Activated B cell treated with CpG ODN at 0.5 μM for 24 hours (primary cell): ENCODE measurements at regions of chr11 and their contacts with region 1.

Region 1: GRCh38 chr11:117226388-117227385 is 5.2 kb downstream of the PCSK7 start:
- DNase-seq: no peak
- ATAC-seq: peak; percentile 64
- H3K4me3 Mint-ChIP-seq: no peak overlapping the region
- H3K27ac Mint-ChIP-seq: peak overlapping the region; percentile 80
- H3K4me1 Mint-ChIP-seq: peaks cover 40% of the 10 kb centered on the region
- H3K27me3 Mint-ChIP-seq: no peaks in the 10 kb centered on the region
- CTCF ChIP-seq: no peak

Region 2: DNA sequence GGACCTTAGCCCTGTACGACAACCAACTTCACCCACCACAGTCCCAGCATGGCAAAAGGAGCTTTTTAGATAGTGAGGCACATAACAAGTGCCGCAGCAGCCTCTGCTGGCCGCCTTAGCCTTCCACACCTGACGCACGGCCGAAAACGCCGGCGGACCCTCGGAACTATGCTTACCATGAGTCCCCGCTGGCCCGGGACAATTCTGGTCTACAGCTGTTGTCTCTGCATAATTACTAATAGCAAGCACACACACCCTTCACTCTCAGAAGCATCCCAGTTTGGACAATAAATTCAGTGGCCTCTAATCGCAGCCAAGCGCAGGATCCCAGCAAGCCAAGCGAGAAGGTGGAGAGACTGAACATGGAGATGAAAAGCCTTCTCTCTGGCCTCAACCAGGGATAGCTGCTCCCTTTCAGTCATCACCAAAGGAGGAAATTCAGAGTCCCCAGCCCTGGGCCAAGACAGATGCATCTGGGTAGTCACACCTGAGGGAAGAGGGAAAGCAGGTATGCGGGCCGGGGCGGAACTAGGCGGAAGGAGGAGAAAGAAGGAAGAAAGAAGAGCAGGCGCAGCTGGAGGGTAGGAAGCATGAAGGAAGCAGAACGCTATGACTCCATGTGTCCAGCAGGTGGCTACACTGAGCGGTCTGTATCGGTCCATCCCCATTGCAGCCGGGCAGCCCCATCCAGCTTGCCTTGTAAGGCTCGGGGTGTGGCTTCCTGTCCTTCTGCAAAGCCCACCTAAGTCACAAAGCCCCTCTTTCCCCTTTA is 494.2 kb before region 1 on chr11:
- CTCF ChIA-PET with region 1: interaction called, 7 read pairs
- POLR2A ChIA-PET with region 1: interaction called, 5 read pairs
- intact Hi-C with region 1: loop called (anchors 1 kb)
- DNase-seq: peak; percentile 40
- ATAC-seq: peak; percentile 97
- H3K4me3 Mint-ChIP-seq: peak overlapping the region; percentile 53
- H3K27ac Mint-ChIP-seq: no peak overlapping the region
- H3K4me1 Mint-ChIP-seq: peaks cover 17% of the 10 kb centered on the region
- H3K27me3 Mint-ChIP-seq: peaks cover 5% of the 10 kb centered on the region
- CTCF ChIP-seq: no peak

Region 3: GRCh38 chr11:116787786-116788486 is 438.8 kb before region 1 on chr11 and contains the start of gene ZPR1:
- CTCF ChIA-PET with region 1: interaction called, 3 read pairs
- POLR2A ChIA-PET with region 1: interaction called, 5 read pairs
- intact Hi-C with region 1: loop called (anchors 2 kb)
- DNase-seq: peak; percentile 81
- ATAC-seq: peak; percentile 81
- H3K4me3 Mint-ChIP-seq: peak within 1 kb of the TSS; percentile 98
- H3K27ac Mint-ChIP-seq: peak within 1 kb of the TSS; percentile 95
- H3K4me1 Mint-ChIP-seq: peaks cover 33% of the 10 kb centered on the region
- H3K27me3 Mint-ChIP-seq: peaks cover 4% of the 10 kb centered on the region
- CTCF ChIP-seq: no peak
- total RNA-seq, gene ZPR1: 69.0 and 78.7 TPM in 2 replicates

Region 4: GRCh38 chr11:117107701-117108590 is 118.7 kb before region 1 on chr11:
- CTCF ChIA-PET with region 1: interaction called, 27 read pairs
- POLR2A ChIA-PET with region 1: no interaction called
- intact Hi-C with region 1: loop called (anchors 1 kb)
- DNase-seq: no peak
- ATAC-seq: no peak
- H3K4me3 Mint-ChIP-seq: no peak overlapping the region
- H3K27ac Mint-ChIP-seq: no peak overlapping the region
- H3K4me1 Mint-ChIP-seq: peaks cover 4% of the 10 kb centered on the region
- H3K27me3 Mint-ChIP-seq: no peaks in the 10 kb centered on the region
- CTCF ChIP-seq: no peak

Region 5: GRCh38 chr11:117178210-117179034 is 48.3 kb before region 1 on chr11 and contains the start of gene SIDT2:
- CTCF ChIA-PET with region 1: interaction called, 119 read pairs
- POLR2A ChIA-PET with region 1: interaction called, 89 read pairs
- intact Hi-C with region 1: loop called (anchors 1 kb)
- DNase-seq: peak; percentile 80
- ATAC-seq: peak; percentile 88
- H3K4me3 Mint-ChIP-seq: peak within 1 kb of the TSS; percentile 96
- H3K27ac Mint-ChIP-seq: peak within 1 kb of the TSS; percentile 91
- H3K4me1 Mint-ChIP-seq: peaks cover 34% of the 10 kb centered on the region
- H3K27me3 Mint-ChIP-seq: no peaks in the 10 kb centered on the region
- CTCF ChIP-seq: no peak
- total RNA-seq, gene SIDT2: 96.7 and 115 TPM in 2 replicates

Region 6: GRCh38 chr11:117273550-117274289 is 47.0 kb after region 1 on chr11:
- CTCF ChIA-PET with region 1: no interaction called
- POLR2A ChIA-PET with region 1: interaction called, 10 read pairs
- intact Hi-C with region 1: no loop called
- DNase-seq: no peak
- ATAC-seq: no peak
- H3K4me3 Mint-ChIP-seq: no peak overlapping the region
- H3K27ac Mint-ChIP-seq: no peak overlapping the region
- H3K4me1 Mint-ChIP-seq: peaks cover 4% of the 10 kb centered on the region
- H3K27me3 Mint-ChIP-seq: no peaks in the 10 kb centered on the region
- CTCF ChIP-seq: no peak

Region 7: DNA sequence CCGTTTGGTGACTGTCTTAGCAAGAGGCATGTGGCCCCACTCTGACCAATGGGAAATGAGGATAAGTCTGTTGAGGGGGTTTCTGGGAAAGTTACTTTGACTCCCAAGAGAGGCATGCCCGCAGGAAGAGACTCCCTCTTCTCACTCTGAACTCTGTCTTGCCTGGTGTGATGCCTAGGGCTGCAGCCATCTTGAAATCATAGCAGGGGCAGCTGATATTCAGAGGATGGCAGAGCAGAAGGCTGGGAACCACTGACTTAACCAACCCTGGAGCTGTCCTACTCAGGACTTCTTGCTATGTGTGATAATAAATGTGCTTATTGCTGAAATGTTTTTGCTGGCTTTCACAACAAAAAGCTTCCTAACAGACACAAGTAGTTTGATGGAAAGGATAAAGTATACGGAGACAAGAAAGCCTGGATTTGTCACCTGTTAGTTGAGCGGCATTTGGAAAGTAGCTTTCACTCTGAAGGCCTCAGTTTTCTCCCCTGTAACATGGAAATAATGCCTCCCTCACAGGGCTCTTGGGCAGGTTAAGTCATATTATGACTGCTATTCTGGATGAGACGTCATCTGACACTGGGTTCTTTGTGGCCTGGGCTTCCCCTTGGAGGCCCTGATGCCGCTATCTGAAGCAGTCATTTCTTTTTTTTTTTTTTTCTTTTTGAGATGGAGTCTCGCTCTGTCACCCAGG is 229.5 kb after region 1 on chr11:
- CTCF ChIA-PET with region 1: no interaction called
- POLR2A ChIA-PET with region 1: no interaction called
- intact Hi-C with region 1: no loop called
- DNase-seq: no peak
- ATAC-seq: peak; percentile 58
- H3K4me3 Mint-ChIP-seq: no peak overlapping the region
- H3K27ac Mint-ChIP-seq: no peak overlapping the region
- H3K4me1 Mint-ChIP-seq: peaks cover 4% of the 10 kb centered on the region
- H3K27me3 Mint-ChIP-seq: no peaks in the 10 kb centered on the region
- CTCF ChIP-seq: no peak

Region 8: GRCh38 chr11:117583063-117583801 is 356.5 kb after region 1 on chr11:
- CTCF ChIA-PET with region 1: no interaction called
- POLR2A ChIA-PET with region 1: no interaction called
- intact Hi-C with region 1: no loop called
- DNase-seq: no peak
- ATAC-seq: no peak
- H3K4me3 Mint-ChIP-seq: no peak overlapping the region
- H3K27ac Mint-ChIP-seq: no peak overlapping the region
- H3K4me1 Mint-ChIP-seq: no peaks in the 10 kb centered on the region
- H3K27me3 Mint-ChIP-seq: peaks cover 7% of the 10 kb centered on the region
- CTCF ChIP-seq: no peak